Activated naive CD4-positive, alpha-beta T cell treated with anti-CD3 and anti-CD28 coated beads for 36 hours (primary cell): ENCODE measurements at regions of chr20 and their contacts with region 1.

Region 1: GRCh38 chr20:38221119-38221589 is 39.4 kb downstream of the KIAA1755 start:
- DNase-seq: peak; percentile 76
- H3K4me3 Mint-ChIP-seq: no peak overlapping the region
- H3K27ac Mint-ChIP-seq: no peak overlapping the region
- H3K4me1 Mint-ChIP-seq: no peaks in the 10 kb centered on the region
- H3K27me3 Mint-ChIP-seq: no peaks in the 10 kb centered on the region

Region 2: DNA sequence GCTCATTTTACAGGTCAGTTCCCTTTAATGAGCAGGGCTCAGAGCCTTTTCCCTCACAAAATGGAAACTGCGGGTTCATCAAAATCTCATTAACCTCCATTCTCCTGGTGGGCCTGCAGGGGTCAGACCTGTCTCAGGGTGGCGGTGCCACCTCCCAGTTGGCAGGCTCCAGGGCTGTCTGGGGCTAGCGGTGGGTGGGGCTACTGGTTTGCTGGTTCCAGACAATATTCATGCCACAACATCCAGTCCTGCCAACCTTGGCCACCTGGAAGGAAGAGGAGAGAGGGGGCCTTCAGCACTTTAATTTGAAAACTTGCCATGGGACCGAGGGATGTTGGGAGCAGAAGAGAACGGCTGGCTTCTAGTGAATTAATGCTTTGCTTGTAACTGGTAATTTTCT is 569.2 kb before region 1 on chr20:
- CTCF ChIA-PET with region 1: interaction called, 3 read pairs
- intact Hi-C with region 1: loop called (anchors 5 kb)
- DNase-seq: peak; percentile 48
- H3K4me3 Mint-ChIP-seq: no peak overlapping the region
- H3K27ac Mint-ChIP-seq: no peak overlapping the region
- H3K4me1 Mint-ChIP-seq: no peaks in the 10 kb centered on the region
- H3K27me3 Mint-ChIP-seq: peaks cover 22% of the 10 kb centered on the region

Region 3: GRCh38 chr20:38057351-38057972 is 163.7 kb before region 1 on chr20:
- CTCF ChIA-PET with region 1: interaction called, 30 read pairs
- intact Hi-C with region 1: loop called (anchors 1 kb)
- DNase-seq: peak; percentile 82
- H3K4me3 Mint-ChIP-seq: no peak overlapping the region
- H3K27ac Mint-ChIP-seq: peak overlapping the region; percentile 73
- H3K4me1 Mint-ChIP-seq: peaks cover 40% of the 10 kb centered on the region
- H3K27me3 Mint-ChIP-seq: no peaks in the 10 kb centered on the region

Region 4: DNA sequence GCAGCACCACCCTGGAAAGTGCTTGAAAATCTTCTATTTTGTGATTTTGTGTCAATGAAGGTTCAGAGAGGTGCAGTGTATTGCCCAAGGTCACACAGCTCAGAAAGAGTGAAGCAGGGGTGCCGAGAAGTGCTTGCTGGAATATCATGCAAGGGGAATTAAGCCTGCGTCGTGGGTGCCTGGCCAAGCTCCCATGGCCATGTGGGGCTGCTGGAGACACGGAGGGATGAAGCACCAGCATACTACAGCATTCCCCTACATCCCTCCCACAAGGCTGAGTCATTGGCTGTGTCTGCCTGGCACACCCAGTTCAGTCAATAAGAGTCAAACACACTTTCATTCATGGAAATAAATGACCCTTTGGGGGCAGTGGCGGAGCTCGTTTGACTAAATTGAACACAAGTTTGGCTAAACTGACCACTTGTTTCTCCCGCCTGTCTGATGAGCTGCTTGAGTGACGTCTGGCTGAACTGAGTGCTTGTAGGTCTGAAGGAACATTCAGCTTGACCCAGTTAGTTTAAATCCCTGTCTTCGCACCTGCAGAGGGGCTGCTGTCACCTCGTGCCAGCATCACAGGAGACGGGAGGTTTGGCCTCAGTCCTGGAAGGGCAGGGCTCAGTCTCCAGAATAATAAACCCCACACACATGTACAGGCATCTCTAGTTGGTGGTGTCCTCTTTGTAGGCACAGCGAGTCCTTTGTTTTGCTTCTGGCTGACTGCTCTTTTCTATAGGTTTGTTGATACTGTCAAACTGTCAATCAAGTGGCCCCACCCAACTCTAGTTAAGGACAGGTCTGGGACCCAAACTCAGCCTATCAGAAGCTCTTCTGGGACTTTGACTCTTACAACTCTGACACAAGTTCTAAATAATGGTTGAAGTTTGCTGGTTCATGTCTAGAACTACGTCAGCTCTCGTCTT is 47.7 kb before region 1 on chr20:
- CTCF ChIA-PET with region 1: interaction called, 12 read pairs
- intact Hi-C with region 1: no loop called
- DNase-seq: no peak
- H3K4me3 Mint-ChIP-seq: no peak overlapping the region
- H3K27ac Mint-ChIP-seq: no peak overlapping the region
- H3K4me1 Mint-ChIP-seq: no peaks in the 10 kb centered on the region
- H3K27me3 Mint-ChIP-seq: peaks cover 8% of the 10 kb centered on the region

Region 5: GRCh38 chr20:38210741-38211140 is 10.4 kb before region 1 on chr20:
- CTCF ChIA-PET with region 1: interaction called, 24 read pairs
- intact Hi-C with region 1: no loop called
- DNase-seq: no peak
- H3K4me3 Mint-ChIP-seq: no peak overlapping the region
- H3K27ac Mint-ChIP-seq: no peak overlapping the region
- H3K4me1 Mint-ChIP-seq: no peaks in the 10 kb centered on the region
- H3K27me3 Mint-ChIP-seq: peaks cover 9% of the 10 kb centered on the region